Colonic mucosa (tissue), 4 donors: ENCODE measurements at regions of chr1 and their contacts with region 1.

Region 1: DNA sequence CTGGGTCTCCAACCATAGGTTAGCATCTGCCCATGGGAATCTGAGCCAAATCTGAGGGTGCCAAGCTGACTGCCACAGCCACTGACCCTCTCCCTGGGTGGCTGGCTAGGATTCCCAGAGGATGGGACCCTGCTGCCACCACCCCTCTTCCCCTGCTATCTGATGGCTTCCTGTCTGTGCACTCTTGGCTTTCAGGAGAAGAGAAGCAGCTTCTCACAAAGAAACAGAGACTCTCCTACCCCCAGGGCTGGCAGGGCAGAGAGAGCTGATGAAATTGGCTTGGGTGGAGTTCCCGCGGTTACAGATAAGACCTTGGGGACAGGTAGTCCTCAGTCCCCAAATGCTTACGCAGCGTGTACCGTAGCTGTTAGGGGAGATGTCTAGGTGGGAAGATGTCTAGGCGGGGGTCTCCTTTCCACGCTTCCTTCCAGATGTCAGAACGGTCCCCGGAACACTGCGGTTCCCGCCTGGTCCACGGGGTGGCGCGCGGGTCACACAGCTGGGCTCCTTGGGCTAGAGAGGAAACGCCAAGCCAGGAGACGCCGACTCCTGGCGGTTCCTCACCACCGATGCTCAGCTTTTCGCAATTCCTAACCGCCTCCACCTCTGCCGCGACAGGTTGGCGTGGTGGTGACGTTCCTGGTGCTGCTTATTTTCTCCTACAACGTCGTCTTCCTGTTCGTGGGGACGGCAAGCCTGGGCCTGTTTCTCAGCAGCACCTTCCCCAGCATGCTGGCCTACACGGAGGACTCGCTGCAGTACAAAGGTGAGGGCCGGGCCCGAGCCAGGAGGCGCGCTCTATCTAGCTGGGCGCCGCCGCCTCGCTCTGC is 40.1 kb downstream of the ELK4 start:
- DNase-seq: peak; percentile 96
- H3K4me3 ChIP-seq: peak overlapping the region; percentile 22
- H3K27ac ChIP-seq: peak overlapping the region; percentile 35
- H3K4me1 ChIP-seq: peaks cover 3% of the 10 kb centered on the region
- H3K27me3 ChIP-seq: no peaks in the 10 kb centered on the region
- CTCF ChIP-seq: peak; percentile 97

Region 2: DNA sequence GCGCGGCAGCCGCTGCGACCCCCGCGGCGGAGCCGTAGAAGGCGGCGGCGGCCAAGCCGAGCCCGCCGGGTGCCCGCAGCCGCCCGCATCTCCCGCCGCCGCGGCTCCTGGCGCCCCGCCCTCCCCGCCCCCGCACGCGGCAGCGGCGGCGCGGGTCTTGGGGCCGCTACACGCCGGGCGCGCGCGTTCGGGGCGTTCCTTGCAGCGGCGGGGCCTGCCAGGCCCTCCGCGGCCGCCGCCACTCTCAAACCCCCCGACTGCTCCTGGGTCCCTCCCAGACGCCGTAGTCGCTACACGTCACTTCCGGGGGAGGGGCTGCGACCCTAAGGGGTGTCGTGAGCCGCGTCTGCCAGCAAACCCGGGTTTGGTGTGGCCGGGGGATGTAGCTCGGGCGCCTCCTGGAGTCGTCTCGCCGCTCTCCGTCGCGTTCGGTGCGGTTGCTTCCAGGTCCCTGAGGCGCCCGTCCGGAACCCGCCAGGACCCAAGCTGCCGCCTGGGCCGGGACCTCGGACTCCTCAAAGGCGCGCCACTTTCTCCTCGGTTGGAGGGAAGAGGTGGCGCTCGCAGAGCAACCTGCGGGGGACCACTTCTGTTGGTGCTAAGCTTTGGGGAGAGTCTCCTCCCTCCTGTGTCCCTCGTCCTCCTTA is 40.1 kb after region 1 on chr1 and contains the start of gene ELK4:
- intact Hi-C with region 1: loop called (anchors 2 kb)
- DNase-seq: peak; percentile 99
- H3K4me3 ChIP-seq: peak within 1 kb of the TSS; percentile 56
- H3K27ac ChIP-seq: peak within 1 kb of the TSS; percentile 86
- H3K4me1 ChIP-seq: no peaks in the 10 kb centered on the region
- H3K27me3 ChIP-seq: no peaks in the 10 kb centered on the region
- CTCF ChIP-seq: peak; percentile 51
- total RNA-seq, gene ELK4: 30.5 to 37.6 TPM

Region 3: DNA sequence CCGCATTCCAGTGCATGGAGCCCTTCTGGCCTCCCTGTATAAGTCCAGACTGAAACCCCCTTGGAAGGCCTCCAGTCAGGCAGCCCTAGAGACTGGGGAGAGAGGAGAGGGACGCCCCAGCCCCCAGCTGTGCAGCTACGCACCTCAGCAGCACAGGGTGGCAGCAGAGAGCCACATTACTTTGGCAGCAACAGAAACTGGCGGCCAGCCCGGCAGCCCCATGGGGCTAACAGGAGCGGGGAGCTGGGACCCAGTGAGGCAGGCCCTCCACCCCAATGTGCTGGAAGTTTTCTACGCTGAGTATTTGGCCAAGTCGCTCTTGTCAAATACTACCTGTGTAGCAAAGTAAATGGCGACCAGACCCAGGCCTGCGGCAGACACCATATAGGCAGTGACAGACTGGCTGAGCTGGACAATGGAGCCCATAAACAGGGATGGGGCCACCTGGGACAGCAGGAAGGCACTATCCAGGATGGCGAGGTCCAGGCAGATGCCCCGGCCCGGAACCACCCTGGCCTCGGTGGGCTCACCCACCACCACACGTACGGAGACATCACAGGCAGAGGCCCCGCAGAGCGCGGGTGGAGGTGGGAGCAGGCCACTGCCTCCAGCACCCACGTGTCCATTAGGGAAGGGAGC is 67.3 kb after region 1 on chr1:
- intact Hi-C with region 1: loop called (anchors 5 kb)
- DNase-seq: peak; percentile 82
- H3K4me3 ChIP-seq: no peak overlapping the region
- H3K27ac ChIP-seq: no peak overlapping the region
- H3K4me1 ChIP-seq: no peaks in the 10 kb centered on the region
- H3K27me3 ChIP-seq: no peaks in the 10 kb centered on the region
- CTCF ChIP-seq: peak; percentile 89